ENCODE measurements at regions of chr15 and their contacts with region 1.

Region 1: DNA sequence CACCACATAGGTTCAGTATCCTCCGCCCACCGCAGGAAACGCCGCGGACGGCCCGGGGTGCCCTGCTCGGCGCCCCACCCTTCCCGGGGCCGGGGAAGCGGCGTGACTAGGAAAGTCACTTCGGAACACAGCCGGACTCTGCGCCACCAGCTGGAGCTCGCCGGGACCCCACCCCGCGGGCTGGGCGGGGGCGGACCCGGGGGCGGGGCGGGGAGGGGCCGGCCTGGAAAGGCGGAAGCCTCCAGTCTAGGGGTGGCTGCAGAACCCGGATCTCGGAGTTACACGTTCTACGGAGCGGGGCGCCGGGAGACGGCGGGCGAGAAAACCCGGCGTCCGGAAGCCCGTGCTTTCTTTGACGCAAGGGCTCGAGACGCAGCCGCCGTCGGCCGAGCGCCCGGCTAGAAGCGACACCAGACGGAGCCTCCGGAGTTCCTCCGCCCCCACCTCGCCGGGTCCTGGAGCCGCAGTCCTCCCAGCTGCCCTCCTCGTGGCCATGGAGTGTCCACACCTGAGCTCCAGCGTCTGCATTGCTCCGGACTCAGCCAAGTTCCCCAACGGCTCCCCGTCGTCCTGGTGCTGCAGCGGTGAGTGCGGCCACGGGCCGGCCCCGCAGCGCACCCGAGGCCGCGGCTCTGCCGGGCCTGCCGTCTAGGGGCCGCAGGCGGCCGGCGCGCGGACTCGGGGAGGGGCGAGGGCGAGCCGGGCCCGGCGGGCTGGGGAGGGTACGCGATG is at the start of gene USP3:
- DNase-seq: peak; percentile 88 to 96 (median 92)
- ATAC-seq: peak; percentile 72
- H3K4me3 ChIP-seq: peak within 1 kb of the TSS; percentile 81 to 86
- H3K4me3 Mint-ChIP-seq: peak within 1 kb of the TSS; percentile 98
- H3K27ac ChIP-seq: peak within 1 kb of the TSS; percentile 94 to 99
- H3K27ac Mint-ChIP-seq: peak within 1 kb of the TSS; percentile 100
- H3K4me1 ChIP-seq: peaks cover 77% of the 10 kb centered on the region
- H3K4me1 Mint-ChIP-seq: peaks cover 78% of the 10 kb centered on the region
- H3K27me3 ChIP-seq: no peaks in the 10 kb centered on the region
- H3K27me3 Mint-ChIP-seq: no peaks in the 10 kb centered on the region
- CTCF ChIP-seq: no peak
- total RNA-seq, gene USP3: 264 to 275 TPM

Region 2: GRCh38 chr15:63188926-63189871 is 315.2 kb before region 1 on chr15 and contains the start of gene RAB8B:
- CTCF ChIA-PET with region 1: interaction called, 3 read pairs
- POLR2A ChIA-PET with region 1: interaction called, 4 read pairs
- intact Hi-C with region 1: loop called in 1 of 2 experiments (anchors 5 kb)
- DNase-seq: peak; percentile 92 to 99 (median 98)
- ATAC-seq: peak; percentile 74
- H3K4me3 ChIP-seq: peak within 1 kb of the TSS; percentile 78 to 86
- H3K4me3 Mint-ChIP-seq: peak within 1 kb of the TSS; percentile 92
- H3K27ac ChIP-seq: peak within 1 kb of the TSS; percentile 71 to 98
- H3K27ac Mint-ChIP-seq: peak within 1 kb of the TSS; percentile 99
- H3K4me1 ChIP-seq: peaks cover 39% of the 10 kb centered on the region
- H3K4me1 Mint-ChIP-seq: peaks cover 47% of the 10 kb centered on the region
- H3K27me3 ChIP-seq: no peaks in the 10 kb centered on the region
- H3K27me3 Mint-ChIP-seq: no peaks in the 10 kb centered on the region
- CTCF ChIP-seq: no peak
- total RNA-seq, gene RAB8B: 145 to 146 TPM

Region 3: DNA sequence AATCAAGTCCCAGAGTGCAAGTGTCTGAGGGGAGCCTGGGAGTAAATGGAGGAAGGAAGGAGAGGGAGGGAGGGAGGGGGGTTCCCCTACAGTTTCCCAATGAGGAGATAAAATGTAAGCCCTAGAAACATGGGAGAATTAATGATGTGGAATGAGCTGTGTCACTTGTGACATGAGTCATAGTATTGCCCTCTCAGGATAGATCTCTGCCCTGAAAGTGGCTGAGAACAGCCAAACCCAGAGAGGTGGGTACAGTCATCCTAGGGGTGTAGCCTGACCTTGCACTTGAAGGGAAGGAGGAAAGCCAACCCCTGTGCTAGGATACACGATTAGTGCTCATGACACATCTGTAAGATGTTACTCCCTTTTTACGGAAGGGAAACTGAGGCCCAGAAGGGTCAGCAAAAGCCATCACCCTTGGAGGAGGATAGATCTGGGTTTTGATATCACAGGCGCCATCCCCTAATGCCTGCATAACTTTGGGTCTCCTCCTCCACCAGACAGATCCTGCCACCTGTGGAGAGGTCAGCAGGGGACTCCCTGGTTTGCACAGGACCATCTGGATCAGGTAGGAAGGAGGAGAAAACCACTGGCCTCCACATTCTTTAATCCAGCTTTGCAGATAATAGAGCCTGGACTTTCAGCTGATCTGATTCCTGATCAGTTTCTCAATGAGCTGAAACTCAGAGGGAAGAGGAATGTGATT is 23.2 kb before region 1 on chr15:
- CTCF ChIA-PET with region 1: interaction called, 69 read pairs
- POLR2A ChIA-PET with region 1: interaction called, 121 read pairs
- intact Hi-C with region 1: loop called (anchors 1 kb)
- DNase-seq: peak in 1 of 9 experiments; percentile 46
- ATAC-seq: no peak
- H3K4me3 ChIP-seq: no peak overlapping the region
- H3K4me3 Mint-ChIP-seq: peak overlapping the region; percentile 15
- H3K27ac ChIP-seq: peak overlapping the region in 1 of 2 experiments; percentile 78
- H3K27ac Mint-ChIP-seq: peak overlapping the region; percentile 99
- H3K4me1 ChIP-seq: peaks cover 73% of the 10 kb centered on the region
- H3K4me1 Mint-ChIP-seq: peaks cover 76% of the 10 kb centered on the region
- H3K27me3 ChIP-seq: no peaks in the 10 kb centered on the region
- H3K27me3 Mint-ChIP-seq: no peaks in the 10 kb centered on the region
- CTCF ChIP-seq: no peak

Region 4: DNA sequence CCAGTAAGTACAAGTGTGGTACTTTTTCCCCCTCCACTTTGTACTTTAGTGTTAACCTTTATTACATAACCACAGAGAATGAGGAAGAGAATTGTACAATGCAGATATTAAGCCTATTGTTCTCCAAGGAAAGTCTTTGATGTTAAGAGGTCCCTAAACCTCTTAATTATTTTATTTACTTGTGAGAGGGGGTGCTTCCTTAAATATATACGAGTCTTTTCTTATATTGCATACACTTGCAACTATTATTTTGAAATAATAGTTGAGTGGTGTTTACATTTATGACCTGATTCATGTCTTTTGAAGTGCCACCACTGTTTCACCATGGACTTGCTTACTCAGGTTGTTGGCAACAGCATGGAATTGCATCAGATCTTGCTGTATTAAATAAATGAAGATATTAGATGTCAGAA is 10.1 kb after region 1 on chr15:
- CTCF ChIA-PET with region 1: interaction called, 9 read pairs
- POLR2A ChIA-PET with region 1: interaction called, 20 read pairs
- intact Hi-C with region 1: loop called in 1 of 2 experiments (anchors 1 kb)
- DNase-seq: peak in 1 of 9 experiments; percentile 31
- ATAC-seq: no peak
- H3K4me3 ChIP-seq: no peak overlapping the region
- H3K4me3 Mint-ChIP-seq: peak overlapping the region; percentile 26
- H3K27ac ChIP-seq: no peak overlapping the region
- H3K27ac Mint-ChIP-seq: peak overlapping the region; percentile 22
- H3K4me1 ChIP-seq: peaks cover 96% of the 10 kb centered on the region
- H3K4me1 Mint-ChIP-seq: peaks cover 90% of the 10 kb centered on the region
- H3K27me3 ChIP-seq: no peaks in the 10 kb centered on the region
- H3K27me3 Mint-ChIP-seq: no peaks in the 10 kb centered on the region
- CTCF ChIP-seq: no peak

Region 5: GRCh38 chr15:63531586-63531985 is 27.2 kb after region 1 on chr15:
- CTCF ChIA-PET with region 1: interaction called, 6 read pairs
- POLR2A ChIA-PET with region 1: interaction called, 17 read pairs
- intact Hi-C with region 1: loop called in 1 of 2 experiments (anchors 2 kb)
- DNase-seq: peak in 2 of 9 experiments; percentile 22 to 33
- ATAC-seq: peak; percentile 42
- H3K4me3 ChIP-seq: no peak overlapping the region
- H3K4me3 Mint-ChIP-seq: no peak overlapping the region
- H3K27ac ChIP-seq: no peak overlapping the region
- H3K27ac Mint-ChIP-seq: no peak overlapping the region
- H3K4me1 ChIP-seq: peaks cover 61% of the 10 kb centered on the region
- H3K4me1 Mint-ChIP-seq: peaks cover 91% of the 10 kb centered on the region
- H3K27me3 ChIP-seq: no peaks in the 10 kb centered on the region
- H3K27me3 Mint-ChIP-seq: no peaks in the 10 kb centered on the region
- CTCF ChIP-seq: no peak

Region 6: GRCh38 chr15:63600616-63601025 is 96.2 kb after region 1 on chr15:
- CTCF ChIA-PET with region 1: interaction called, 4 read pairs
- POLR2A ChIA-PET with region 1: interaction called, 28 read pairs
- intact Hi-C with region 1: loop called in 1 of 2 experiments (anchors 1 kb)
- DNase-seq: peak; percentile 79 to 98 (median 90)
- ATAC-seq: peak; percentile 80
- H3K4me3 ChIP-seq: peak overlapping the region; percentile 87 to 96
- H3K4me3 Mint-ChIP-seq: peak overlapping the region; percentile 94
- H3K27ac ChIP-seq: peak overlapping the region; percentile 75 to 87
- H3K27ac Mint-ChIP-seq: peak overlapping the region; percentile 94
- H3K4me1 ChIP-seq: peaks cover 29% of the 10 kb centered on the region
- H3K4me1 Mint-ChIP-seq: peaks cover 56% of the 10 kb centered on the region
- H3K27me3 ChIP-seq: no peaks in the 10 kb centered on the region
- H3K27me3 Mint-ChIP-seq: no peaks in the 10 kb centered on the region
- CTCF ChIP-seq: no peak

Region 7: DNA sequence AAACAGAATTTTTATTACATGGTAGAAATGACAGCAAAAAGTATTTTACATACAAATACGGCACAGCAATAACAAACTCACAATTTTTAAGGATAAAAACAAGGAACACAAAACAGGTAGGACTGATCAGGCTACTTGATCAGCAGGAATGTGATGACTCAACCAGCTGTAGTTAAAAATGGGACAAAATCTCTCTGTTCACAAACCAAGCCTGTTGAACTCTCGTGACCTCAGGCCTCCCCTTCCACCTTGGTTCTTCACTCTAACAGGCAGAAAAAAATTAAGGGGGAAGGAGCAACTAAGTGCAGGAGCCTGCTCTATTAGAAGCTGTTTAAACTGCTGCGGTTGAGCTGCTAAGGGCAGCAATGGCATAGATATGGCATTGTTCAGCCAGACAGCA is 111.5 kb after region 1 on chr15:
- CTCF ChIA-PET with region 1: no interaction called
- POLR2A ChIA-PET with region 1: no interaction called
- intact Hi-C with region 1: no loop called
- DNase-seq: no peak
- ATAC-seq: no peak
- H3K4me3 ChIP-seq: no peak overlapping the region
- H3K4me3 Mint-ChIP-seq: no peak overlapping the region
- H3K27ac ChIP-seq: no peak overlapping the region
- H3K27ac Mint-ChIP-seq: no peak overlapping the region
- H3K4me1 ChIP-seq: peaks cover 1% of the 10 kb centered on the region
- H3K4me1 Mint-ChIP-seq: peaks cover 14% of the 10 kb centered on the region
- H3K27me3 ChIP-seq: no peaks in the 10 kb centered on the region
- H3K27me3 Mint-ChIP-seq: no peaks in the 10 kb centered on the region
- CTCF ChIP-seq: no peak

Region 8: DNA sequence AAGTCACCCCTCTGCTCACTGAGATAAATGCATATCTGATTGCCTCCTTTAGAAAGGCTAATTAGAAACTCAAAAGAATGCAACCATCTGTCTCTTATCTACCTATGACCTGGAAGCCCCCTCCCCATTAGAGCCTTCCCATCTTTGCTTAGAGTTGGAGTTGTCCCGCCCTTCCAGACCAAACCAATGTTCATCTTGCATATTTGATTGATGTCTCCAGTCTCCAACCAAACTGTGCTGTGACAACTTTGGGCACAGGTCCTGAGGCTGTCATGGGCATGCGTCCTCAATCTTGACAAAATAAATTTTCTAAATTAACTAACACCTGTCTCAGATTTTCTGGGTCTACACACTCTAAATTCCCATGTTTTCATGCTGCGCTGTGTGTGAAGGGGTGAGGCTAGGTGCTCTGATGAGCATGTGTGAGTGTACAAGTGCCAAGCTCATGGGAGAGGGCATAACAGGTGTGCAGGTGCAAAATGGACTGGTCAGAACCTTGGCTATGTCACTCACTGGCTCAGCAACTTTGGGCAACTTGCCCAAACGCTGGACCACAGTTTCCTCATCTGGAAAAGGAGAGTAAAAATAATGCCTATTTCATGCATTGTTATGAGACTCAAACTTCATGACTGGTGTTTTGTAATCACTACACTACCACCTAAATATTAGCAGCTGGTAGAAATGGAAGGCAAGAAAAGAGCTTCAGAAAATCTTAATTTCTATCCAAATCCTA is 534.6 kb after region 1 on chr15:
- CTCF ChIA-PET with region 1: no interaction called
- POLR2A ChIA-PET with region 1: no interaction called
- intact Hi-C with region 1: no loop called
- DNase-seq: no peak
- ATAC-seq: no peak
- H3K4me3 ChIP-seq: no peak overlapping the region
- H3K4me3 Mint-ChIP-seq: no peak overlapping the region
- H3K27ac ChIP-seq: no peak overlapping the region
- H3K27ac Mint-ChIP-seq: no peak overlapping the region
- H3K4me1 ChIP-seq: no peaks in the 10 kb centered on the region
- H3K4me1 Mint-ChIP-seq: peaks cover 5% of the 10 kb centered on the region
- H3K27me3 ChIP-seq: no peaks in the 10 kb centered on the region
- H3K27me3 Mint-ChIP-seq: no peaks in the 10 kb centered on the region
- CTCF ChIP-seq: no peak

Region 9: GRCh38 chr15:64162870-64163658 is 658.7 kb after region 1 on chr15 and contains the start of gene PPIB:
- CTCF ChIA-PET with region 1: no interaction called
- POLR2A ChIA-PET with region 1: no interaction called
- intact Hi-C with region 1: loop called in 1 of 2 experiments (anchors 10 kb)
- DNase-seq: peak; percentile 93 to 98 (median 96)
- ATAC-seq: peak; percentile 93
- H3K4me3 ChIP-seq: peak within 1 kb of the TSS; percentile 88 to 92
- H3K4me3 Mint-ChIP-seq: peak within 1 kb of the TSS; percentile 90
- H3K27ac ChIP-seq: peak within 1 kb of the TSS; percentile 79 to 88
- H3K27ac Mint-ChIP-seq: peak within 1 kb of the TSS; percentile 87
- H3K4me1 ChIP-seq: peaks cover 38% of the 10 kb centered on the region
- H3K4me1 Mint-ChIP-seq: peaks cover 41% of the 10 kb centered on the region
- H3K27me3 ChIP-seq: no peaks in the 10 kb centered on the region
- H3K27me3 Mint-ChIP-seq: no peaks in the 10 kb centered on the region
- CTCF ChIP-seq: no peak
- total RNA-seq, gene PPIB: 148 to 156 TPM

Region 10: DNA sequence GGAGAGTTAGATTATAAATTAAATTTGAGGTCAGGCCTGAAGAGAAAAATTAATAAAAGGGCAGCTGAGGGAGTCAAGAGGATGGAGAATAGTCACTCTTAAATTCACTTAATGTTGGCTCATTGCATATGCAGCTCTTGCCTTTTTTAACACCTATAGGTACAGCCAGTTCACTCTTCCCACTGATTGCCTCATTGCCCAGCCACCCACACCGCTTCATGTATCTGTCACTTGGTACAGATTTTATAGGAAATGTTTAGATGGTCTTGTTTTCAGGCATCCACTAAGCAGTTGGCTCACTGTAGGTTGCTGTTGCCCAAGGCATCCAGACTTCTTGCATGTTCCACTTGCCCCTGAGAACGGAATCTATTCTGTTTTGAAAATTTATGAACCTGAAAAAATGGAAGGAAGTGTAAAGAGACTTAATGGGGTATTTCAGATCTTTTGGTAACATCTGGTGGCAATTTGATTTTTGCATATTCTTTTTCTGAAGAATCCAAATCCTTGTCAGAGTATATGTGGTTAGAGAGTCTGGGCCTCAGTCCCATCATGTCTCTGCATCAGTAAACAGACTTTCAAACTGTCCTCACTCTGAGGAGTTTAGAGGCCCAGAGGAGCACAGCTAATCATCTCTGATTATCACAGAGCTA is 1119.1 kb after region 1 on chr15:
- CTCF ChIA-PET with region 1: no interaction called
- POLR2A ChIA-PET with region 1: no interaction called
- intact Hi-C with region 1: no loop called
- DNase-seq: peak in 2 of 9 experiments; percentile 22 to 49
- ATAC-seq: no peak
- H3K4me3 ChIP-seq: peak overlapping the region; percentile 26 to 29
- H3K4me3 Mint-ChIP-seq: peak overlapping the region; percentile 75
- H3K27ac ChIP-seq: peak overlapping the region; percentile 42 to 74
- H3K27ac Mint-ChIP-seq: peak overlapping the region; percentile 91
- H3K4me1 ChIP-seq: peaks cover 94% of the 10 kb centered on the region
- H3K4me1 Mint-ChIP-seq: peaks cover 92% of the 10 kb centered on the region
- H3K27me3 ChIP-seq: no peaks in the 10 kb centered on the region
- H3K27me3 Mint-ChIP-seq: no peaks in the 10 kb centered on the region
- CTCF ChIP-seq: no peak

Measured in CD8-positive, alpha-beta T cell (primary cell).